Gastrocnemius medialis (tissue), 4 donors: ENCODE measurements at regions of chr22 and their contacts with region 1.

Region 1: DNA sequence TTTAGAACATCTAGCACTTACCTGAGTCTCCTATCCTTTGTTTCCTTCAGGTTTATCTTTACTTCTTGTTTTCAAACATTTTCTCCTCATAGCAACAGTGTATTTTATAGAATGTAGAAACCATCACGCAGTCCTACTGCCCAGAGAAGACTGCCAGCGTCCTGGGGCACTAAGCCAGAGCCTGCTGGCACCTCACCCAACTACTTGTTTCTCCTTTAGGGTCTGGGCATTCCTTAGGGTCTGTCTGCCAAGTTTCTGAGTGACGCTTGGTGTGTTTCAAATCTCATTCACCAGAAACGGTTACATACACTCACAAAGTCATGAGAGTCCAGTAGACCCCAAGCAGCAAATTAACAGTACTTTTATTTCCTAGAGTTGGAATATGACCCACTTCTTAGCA is 49.6 kb upstream of the SLC25A1 start:
- DNase-seq: no peak
- ATAC-seq: no peak
- H3K4me3 ChIP-seq: no peak overlapping the region
- H3K27ac ChIP-seq: peak overlapping the region in 2 of 4 donors; percentile 8 to 10
- H3K4me1 ChIP-seq: peaks cover 4 to 14% of the 10 kb centered on the region in 2 donors
- H3K27me3 ChIP-seq: no peaks in the 10 kb centered on the region
- CTCF ChIP-seq: no peak
- POLR2A ChIP-seq: no peak

Region 2: GRCh38 chr22:19149047-19149883 is 78.9 kb before region 1 on chr22:
- in situ Hi-C with region 1: no loop called
- intact Hi-C with region 1: no loop called
- DNase-seq: no peak
- ATAC-seq: no peak
- H3K4me3 ChIP-seq: peak overlapping the region; percentile 17 to 47 (median 34)
- H3K27ac ChIP-seq: no peak overlapping the region
- H3K4me1 ChIP-seq: peaks cover 0 to 6% of the 10 kb centered on the region in 2 donors
- H3K27me3 ChIP-seq: peaks cover 46 to 52% (median 52%) of the 10 kb centered on the region in 3 donors
- CTCF ChIP-seq: no peak
- POLR2A ChIP-seq: no peak

Region 3: DNA sequence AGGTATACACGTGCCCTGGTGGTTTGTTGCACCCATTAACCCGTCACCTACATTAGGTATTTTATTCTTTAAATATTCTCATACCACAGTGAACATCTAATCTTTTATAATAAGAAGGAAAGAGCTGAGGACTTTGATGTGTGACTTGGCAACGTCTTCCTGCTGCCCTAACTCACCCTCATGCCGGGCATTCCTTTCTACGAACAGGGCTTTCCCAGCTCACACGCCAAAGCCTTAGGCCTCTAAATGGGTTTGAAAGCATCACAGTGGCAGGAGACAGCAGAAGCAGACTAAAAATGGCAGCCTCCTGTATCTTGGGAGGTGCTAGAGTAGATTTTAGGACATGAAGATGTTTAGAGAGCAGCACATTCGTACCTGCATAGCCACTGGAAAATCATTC is 10.7 kb after region 1 on chr22:
- in situ Hi-C with region 1: no loop called
- intact Hi-C with region 1: no loop called
- DNase-seq: no peak
- ATAC-seq: no peak
- H3K4me3 ChIP-seq: no peak overlapping the region
- H3K27ac ChIP-seq: peak overlapping the region; percentile 2 to 51 (median 24)
- H3K4me1 ChIP-seq: peaks cover 9 to 23% of the 10 kb centered on the region in 2 donors
- H3K27me3 ChIP-seq: no peaks in the 10 kb centered on the region
- CTCF ChIP-seq: no peak
- POLR2A ChIP-seq: no peak

Region 4: GRCh38 chr22:19271856-19272535 is 43.8 kb after region 1 on chr22:
- in situ Hi-C with region 1: loop called in 1 of 4 experiments (anchors 10 kb)
- intact Hi-C with region 1: no loop called
- DNase-seq: no peak
- ATAC-seq: no peak
- H3K4me3 ChIP-seq: no peak overlapping the region
- H3K27ac ChIP-seq: peak overlapping the region; percentile 94 to 100 (median 96)
- H3K4me1 ChIP-seq: peaks cover 19 to 44% of the 10 kb centered on the region in 2 donors
- H3K27me3 ChIP-seq: no peaks in the 10 kb centered on the region
- CTCF ChIP-seq: no peak
- POLR2A ChIP-seq: no peak

Region 5: GRCh38 chr22:19341500-19341899 is 113.3 kb after region 1 on chr22:
- in situ Hi-C with region 1: no loop called
- intact Hi-C with region 1: no loop called
- DNase-seq: no peak
- ATAC-seq: no peak
- H3K4me3 ChIP-seq: no peak overlapping the region
- H3K27ac ChIP-seq: no peak overlapping the region
- H3K4me1 ChIP-seq: no peaks in the 10 kb centered on the region
- H3K27me3 ChIP-seq: no peaks in the 10 kb centered on the region
- CTCF ChIP-seq: no peak
- POLR2A ChIP-seq: no peak

Region 6: GRCh38 chr22:19565382-19566278 is 337.5 kb after region 1 on chr22:
- in situ Hi-C with region 1: no loop called
- intact Hi-C with region 1: no loop called
- DNase-seq: no peak
- ATAC-seq: peak; percentile 38 to 43
- H3K4me3 ChIP-seq: no peak overlapping the region
- H3K27ac ChIP-seq: peak overlapping the region in 3 of 4 donors; percentile 73 to 77 (median 74)
- H3K4me1 ChIP-seq: peaks cover 0 to 4% of the 10 kb centered on the region in 2 donors
- H3K27me3 ChIP-seq: no peaks in the 10 kb centered on the region
- CTCF ChIP-seq: no peak
- POLR2A ChIP-seq: no peak